ENCODE measurements at regions of chr1 and their contacts with region 1.

Region 1: DNA sequence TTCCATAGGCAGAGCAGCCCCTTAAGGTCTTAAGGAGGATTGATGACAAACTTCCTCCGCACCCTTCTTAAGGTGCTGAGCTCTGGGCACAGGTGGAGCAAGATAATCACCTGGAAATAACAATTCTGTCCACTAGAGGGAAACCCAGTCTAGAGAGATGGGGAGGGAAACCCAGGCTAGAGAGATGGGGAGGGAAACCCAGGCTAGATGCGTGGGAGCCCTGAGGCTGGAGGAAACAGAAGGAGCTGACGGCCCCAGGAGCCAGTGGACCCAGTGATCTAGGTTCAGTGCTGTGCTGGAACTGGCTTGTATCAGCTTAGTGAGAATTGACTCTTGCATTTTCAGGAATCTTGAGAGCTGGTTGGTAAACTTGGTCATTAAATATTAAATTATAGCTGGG is 17.8 kb upstream of the MYCL start:
- DNase-seq: peak; percentile 35
- ATAC-seq: peak; percentile 100
- H3K4me3 ChIP-seq: no peak overlapping the region
- H3K27ac ChIP-seq: no peak overlapping the region
- H3K4me1 ChIP-seq: 0 out of 2 replicates have a peak, but pooled peaks cover 3% of the 10 kb centered on the region
- H3K27me3 ChIP-seq: no peaks in the 10 kb centered on the region
- CTCF ChIP-seq: peak; percentile 70 to 91 (median 72)
- EP300 ChIP-seq: no peak
- POLR2A ChIP-seq: no peak
- RAD21 ChIP-seq: peak; percentile 99

Region 2: DNA sequence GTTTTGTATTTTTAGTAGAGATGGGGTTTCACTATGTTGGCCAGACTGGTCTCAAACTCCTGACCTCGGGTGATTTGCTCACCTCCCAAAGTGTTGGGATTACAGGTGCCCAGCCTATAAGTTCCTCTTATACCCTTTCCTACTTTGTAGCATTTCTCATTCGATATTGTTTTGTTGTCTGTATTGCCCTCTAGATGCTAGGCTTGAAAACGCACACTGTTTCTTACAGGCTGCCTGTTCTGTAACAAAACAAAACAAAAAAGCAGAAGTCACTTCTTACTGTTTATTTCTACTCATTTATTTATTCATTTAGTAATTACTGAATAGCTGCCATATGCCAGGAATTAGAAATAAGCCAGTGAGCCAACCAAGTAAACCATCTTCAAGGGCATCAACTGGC is 565.0 kb before region 1 on chr1:
- CTCF ChIA-PET with region 1: no interaction called
- POLR2A ChIA-PET with region 1: no interaction called
- RAD21 ChIA-PET with region 1: no interaction called
- SMC1A ChIA-PET with region 1: no interaction called
- in situ Hi-C with region 1: no loop called
- intact Hi-C with region 1: no loop called
- DNase-seq: no peak
- ATAC-seq: no peak
- H3K4me3 ChIP-seq: no peak overlapping the region
- H3K27ac ChIP-seq: no peak overlapping the region
- H3K4me1 ChIP-seq: no peaks in the 10 kb centered on the region
- H3K27me3 ChIP-seq: no peaks in the 10 kb centered on the region
- CTCF ChIP-seq: peak in 2 of 3 experiments; percentile 7 to 20; a peak in 1 of 6 replicates
- EP300 ChIP-seq: no peak
- POLR2A ChIP-seq: no peak
- RAD21 ChIP-seq: 0 out of 2 replicates have a peak, but pooled peaks have one; percentile 7

Region 3: DNA sequence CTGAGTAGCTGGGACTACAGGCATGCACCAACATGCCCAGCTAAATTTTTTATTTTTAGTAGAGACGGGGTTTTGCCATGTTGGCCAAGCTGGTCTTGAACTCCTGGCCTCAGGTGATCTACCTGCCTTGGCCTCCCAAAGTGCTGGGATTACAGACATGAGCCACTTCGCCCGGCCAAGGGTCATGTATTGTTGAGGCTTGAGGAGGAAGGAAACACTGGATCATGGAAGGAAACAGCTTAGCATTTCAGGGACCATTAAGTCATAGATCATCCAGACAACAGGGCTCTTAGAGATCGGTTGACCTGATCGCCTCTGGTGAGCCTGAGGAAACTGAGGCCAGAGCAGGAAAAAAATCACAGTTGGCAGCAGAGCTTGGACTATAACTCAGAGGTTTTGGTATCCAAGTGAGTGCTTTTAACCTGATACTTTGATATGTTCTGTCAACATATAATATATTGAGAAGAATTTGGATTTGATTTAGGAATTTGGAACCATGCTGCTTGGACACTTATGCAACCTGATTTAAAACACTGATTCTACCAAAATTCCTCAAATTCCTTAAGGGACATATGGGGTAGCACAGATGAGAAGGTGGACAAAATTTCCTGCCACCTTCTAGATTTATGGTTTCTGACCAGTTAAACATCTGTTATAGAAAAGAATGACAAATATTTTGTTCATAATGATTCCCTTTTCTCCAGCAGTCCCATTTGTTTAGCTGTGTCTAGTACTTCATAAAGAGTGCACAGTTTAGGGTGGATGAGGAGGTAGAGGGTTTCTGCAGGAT is 441.2 kb before region 1 on chr1:
- CTCF ChIA-PET with region 1: no interaction called
- POLR2A ChIA-PET with region 1: no interaction called
- RAD21 ChIA-PET with region 1: no interaction called
- SMC1A ChIA-PET with region 1: no interaction called
- in situ Hi-C with region 1: no loop called
- intact Hi-C with region 1: no loop called
- DNase-seq: no peak
- ATAC-seq: no peak
- H3K4me3 ChIP-seq: no peak overlapping the region
- H3K27ac ChIP-seq: no peak overlapping the region
- H3K4me1 ChIP-seq: no peaks in the 10 kb centered on the region
- H3K27me3 ChIP-seq: no peaks in the 10 kb centered on the region
- CTCF ChIP-seq: no peak
- EP300 ChIP-seq: no peak
- POLR2A ChIP-seq: no peak
- RAD21 ChIP-seq: no peak

Region 4: DNA sequence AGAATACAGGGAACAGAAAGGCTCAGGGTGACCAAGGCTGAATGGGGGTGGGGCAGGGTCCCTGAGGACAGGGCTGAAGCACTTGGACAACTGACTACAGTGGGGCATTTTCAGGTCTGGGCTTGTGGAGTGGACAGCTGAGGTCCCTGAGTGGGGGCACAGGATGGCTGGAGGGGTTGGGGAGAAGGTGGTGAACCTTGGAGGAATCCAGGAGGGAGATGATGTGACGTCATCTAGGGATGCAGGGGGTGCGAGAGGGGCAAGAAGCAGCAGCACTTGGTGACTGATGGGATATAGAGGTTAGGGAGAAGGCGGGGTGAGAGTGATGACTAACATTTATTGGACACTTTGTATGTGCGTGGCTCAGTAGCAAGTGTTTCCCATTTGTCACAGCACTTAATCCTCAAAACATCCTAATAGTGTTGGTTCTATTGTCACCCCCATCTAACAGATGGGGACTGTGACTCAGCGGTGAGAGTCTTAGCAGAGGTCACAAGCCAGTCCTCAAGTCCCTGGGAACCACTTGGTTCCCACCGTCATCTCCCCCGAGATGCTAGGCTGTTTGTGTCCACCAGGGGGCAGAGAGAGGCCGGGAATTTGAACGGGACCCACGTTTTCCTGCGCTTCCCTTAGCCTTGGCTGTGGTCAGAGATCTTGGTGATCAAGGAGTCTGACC is 103.0 kb before region 1 on chr1:
- CTCF ChIA-PET with region 1: interaction called, 20 read pairs
- POLR2A ChIA-PET with region 1: no interaction called
- RAD21 ChIA-PET with region 1: interaction called, 12 read pairs
- SMC1A ChIA-PET with region 1: interaction called, 11 read pairs
- in situ Hi-C with region 1: no loop called
- intact Hi-C with region 1: no loop called
- DNase-seq: peak; percentile 55
- ATAC-seq: peak; percentile 79
- H3K4me3 ChIP-seq: no peak overlapping the region
- H3K27ac ChIP-seq: peak overlapping the region; percentile 42; the same call in 1 of the 2 replicates
- H3K4me1 ChIP-seq: peaks cover 17% of the 10 kb centered on the region
- H3K27me3 ChIP-seq: no peaks in the 10 kb centered on the region
- CTCF ChIP-seq: peak; percentile 79 to 88 (median 80)
- EP300 ChIP-seq: 0 out of 4 replicates have a peak, but pooled peaks of 1 of the 2 experiments have one; percentile 32
- POLR2A ChIP-seq: no peak
- RAD21 ChIP-seq: peak; percentile 87

Region 5: DNA sequence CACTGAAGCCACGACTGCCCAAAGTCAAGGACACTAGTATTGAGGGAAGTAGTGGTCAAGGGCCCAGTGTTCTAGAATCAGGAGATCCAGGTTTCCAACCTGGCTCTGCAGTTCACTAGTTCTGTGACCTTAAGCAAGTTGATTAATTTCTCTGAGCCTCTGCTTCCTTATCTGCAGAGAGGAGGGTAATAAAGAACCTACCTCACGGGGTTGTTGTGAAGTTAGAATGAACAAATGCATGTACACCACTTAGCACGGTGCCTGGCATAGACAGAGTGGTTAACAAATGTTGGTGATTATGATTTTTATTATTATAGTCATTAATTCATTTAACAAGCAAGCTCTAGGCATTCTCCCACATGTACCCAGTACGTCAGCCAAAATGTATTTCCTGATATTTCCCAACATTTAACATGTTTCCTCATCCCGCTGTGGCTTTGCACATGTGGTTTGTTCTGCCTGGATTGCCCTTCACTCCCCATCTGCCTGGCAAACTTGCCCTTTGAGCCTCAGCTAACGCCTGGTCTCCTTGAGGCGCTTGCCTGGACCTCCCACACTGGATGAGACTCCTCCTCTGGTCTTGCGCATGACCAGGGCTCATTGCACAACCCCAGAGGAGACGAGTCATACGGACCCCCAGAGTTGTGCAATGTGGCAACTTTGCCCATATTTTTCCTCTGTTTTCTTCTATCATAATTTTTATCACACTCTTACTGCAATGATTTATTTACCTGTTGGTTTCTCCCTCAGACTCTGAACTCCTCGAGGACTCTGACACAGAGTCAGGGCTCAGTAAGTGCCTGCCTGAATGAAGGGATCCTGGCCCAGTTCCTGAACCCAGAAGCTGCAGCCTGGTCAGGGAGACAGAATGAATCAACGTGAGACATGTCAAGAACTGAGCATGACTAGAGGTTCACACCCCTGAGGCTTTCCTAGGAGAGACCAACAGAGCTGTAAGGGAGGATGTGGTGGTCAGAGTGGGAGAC is 14.7 kb after region 1 on chr1:
- CTCF ChIA-PET with region 1: interaction called, 16 read pairs
- POLR2A ChIA-PET with region 1: interaction called, 3 read pairs
- RAD21 ChIA-PET with region 1: interaction called, 4 read pairs
- SMC1A ChIA-PET with region 1: interaction called, 5 read pairs
- in situ Hi-C with region 1: no loop called
- intact Hi-C with region 1: no loop called
- DNase-seq: no peak
- ATAC-seq: no peak
- H3K4me3 ChIP-seq: no peak overlapping the region
- H3K27ac ChIP-seq: no peak overlapping the region
- H3K4me1 ChIP-seq: no peaks in the 10 kb centered on the region
- H3K27me3 ChIP-seq: no peaks in the 10 kb centered on the region
- CTCF ChIP-seq: no peak
- EP300 ChIP-seq: no peak
- POLR2A ChIP-seq: no peak
- RAD21 ChIP-seq: no peak

Region 6: DNA sequence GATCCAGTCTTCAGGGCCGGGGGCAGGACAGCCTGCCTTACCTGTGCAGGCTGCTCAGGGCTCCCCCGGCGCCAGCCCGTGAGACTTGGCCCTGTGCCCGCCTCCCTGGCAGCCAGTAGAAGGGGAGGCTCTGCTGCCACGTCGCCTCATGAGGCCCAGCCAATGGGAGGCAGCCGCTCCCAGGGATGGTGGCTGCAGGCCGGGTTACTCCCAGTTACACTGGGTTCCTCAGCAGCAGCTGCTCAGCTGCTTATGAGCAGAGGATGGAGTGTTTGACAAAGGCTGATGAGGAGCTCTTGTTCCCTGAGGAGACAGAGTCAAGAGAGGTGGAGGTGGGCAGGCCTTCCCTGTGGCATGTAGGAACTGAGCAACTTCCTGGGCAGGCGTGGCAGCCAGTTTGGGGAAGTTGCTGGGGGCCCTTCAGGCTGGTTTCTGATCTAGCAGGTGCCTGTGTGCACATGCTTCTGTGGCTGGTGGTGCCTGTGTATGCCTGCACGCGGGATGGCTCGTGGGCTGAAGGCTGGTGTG is 41.0 kb after region 1 on chr1:
- CTCF ChIA-PET with region 1: interaction called, 34 read pairs
- POLR2A ChIA-PET with region 1: no interaction called
- RAD21 ChIA-PET with region 1: interaction called, 23 read pairs
- SMC1A ChIA-PET with region 1: interaction called, 18 read pairs
- in situ Hi-C with region 1: no loop called
- intact Hi-C with region 1: no loop called
- DNase-seq: peak; percentile 58
- ATAC-seq: peak; percentile 80
- H3K4me3 ChIP-seq: peak overlapping the region; percentile 14; the same call in 1 of the 2 replicates
- H3K27ac ChIP-seq: peak overlapping the region; percentile 68
- H3K4me1 ChIP-seq: peaks cover 22% of the 10 kb centered on the region
- H3K27me3 ChIP-seq: no peaks in the 10 kb centered on the region
- CTCF ChIP-seq: no peak
- EP300 ChIP-seq: no peak
- POLR2A ChIP-seq: peak; percentile 71
- RAD21 ChIP-seq: no peak

Region 7: DNA sequence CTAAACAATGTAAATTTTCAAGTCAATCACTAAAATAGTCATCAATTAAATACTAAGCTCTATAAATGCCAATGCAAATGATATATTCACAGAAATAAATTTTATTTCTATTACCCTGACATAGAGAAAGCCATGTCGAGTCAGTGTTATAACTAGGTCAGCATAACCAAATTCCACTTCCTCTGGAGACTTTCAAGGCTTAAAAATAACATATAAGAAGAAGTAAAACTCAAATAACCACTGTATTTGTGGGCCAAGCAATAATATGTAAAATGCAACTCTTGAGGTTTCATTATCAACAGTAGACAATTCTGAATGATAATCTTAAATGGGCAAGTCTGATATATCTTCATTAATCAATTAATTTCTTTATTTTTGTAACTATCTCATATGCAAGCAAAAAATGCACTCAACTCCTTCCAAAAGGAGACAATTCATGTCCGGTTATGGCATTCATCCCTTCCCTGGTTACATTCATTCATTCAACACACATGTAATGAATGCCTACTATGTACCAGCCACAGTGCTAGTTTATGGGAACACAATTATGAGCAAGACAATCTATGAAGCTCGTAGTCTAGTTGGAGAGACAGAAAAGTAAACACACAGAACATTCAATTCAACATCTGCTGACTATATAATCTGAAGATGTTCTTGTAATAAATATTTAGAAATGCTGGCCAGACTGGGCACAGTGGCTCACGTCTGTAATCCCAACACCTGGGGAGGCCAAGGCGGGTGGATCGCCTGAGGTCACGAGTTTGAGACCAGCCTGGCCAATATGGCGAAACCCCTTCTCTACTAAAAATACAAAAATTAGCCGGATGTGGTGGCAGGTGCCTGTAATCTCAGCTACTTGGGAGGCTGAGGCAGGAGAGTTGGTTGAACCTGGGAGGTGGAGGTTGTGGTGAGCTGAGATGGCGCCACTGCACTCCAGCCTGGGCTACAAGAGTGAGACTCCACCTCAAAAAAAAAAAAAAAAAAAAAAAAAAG is 83.9 kb after region 1 on chr1:
- CTCF ChIA-PET with region 1: interaction called, 12 read pairs
- POLR2A ChIA-PET with region 1: interaction called, 3 read pairs
- RAD21 ChIA-PET with region 1: interaction called, 3 read pairs
- SMC1A ChIA-PET with region 1: interaction called, 4 read pairs
- in situ Hi-C with region 1: no loop called
- intact Hi-C with region 1: no loop called
- DNase-seq: peak; percentile 53
- ATAC-seq: peak; percentile 95
- H3K4me3 ChIP-seq: 0 out of 2 replicates have a peak overlapping the region, but pooled peaks have one; percentile 16
- H3K27ac ChIP-seq: peak overlapping the region; percentile 89
- H3K4me1 ChIP-seq: peaks cover 42% of the 10 kb centered on the region
- H3K27me3 ChIP-seq: no peaks in the 10 kb centered on the region
- CTCF ChIP-seq: no peak
- EP300 ChIP-seq: no peak
- POLR2A ChIP-seq: no peak
- RAD21 ChIP-seq: no peak

Region 8: DNA sequence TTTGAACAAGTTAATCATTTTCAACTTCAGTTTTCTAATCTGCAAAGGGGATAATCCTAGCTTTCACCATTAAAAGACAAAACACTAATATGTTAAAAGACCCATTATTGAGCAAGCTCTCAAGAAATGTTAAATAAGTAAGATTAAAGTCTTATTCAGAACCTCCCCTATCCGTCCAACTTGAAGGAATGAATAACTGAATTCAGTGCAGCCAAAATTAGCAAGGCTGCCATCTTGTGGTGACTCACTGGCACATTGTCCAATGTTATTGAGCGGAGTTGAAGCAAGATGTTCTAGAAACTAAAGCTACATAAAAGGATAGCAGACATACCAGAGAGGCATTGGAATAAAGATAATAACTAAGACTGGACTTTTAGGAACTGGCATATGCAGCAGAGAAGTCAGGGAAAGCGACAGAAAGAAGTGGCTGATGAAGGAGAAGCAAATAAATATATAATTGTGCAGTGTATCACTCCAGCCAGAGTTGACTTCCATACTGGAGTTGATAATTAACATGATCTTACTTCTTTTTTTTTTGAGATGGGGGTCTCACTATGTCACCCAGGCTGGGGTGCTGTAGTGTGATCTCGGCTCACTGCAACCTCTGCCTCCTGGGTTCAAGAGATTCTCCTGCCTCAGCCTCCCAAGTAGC is 112.8 kb after region 1 on chr1:
- CTCF ChIA-PET with region 1: interaction called, 311 read pairs
- POLR2A ChIA-PET with region 1: interaction called, 8 read pairs
- RAD21 ChIA-PET with region 1: interaction called, 136 read pairs
- SMC1A ChIA-PET with region 1: interaction called, 180 read pairs
- in situ Hi-C with region 1: loop called (anchors 5 kb)
- intact Hi-C with region 1: loop called (anchors 1 kb)
- DNase-seq: no peak
- ATAC-seq: peak; percentile 95
- H3K4me3 ChIP-seq: no peak overlapping the region
- H3K27ac ChIP-seq: no peak overlapping the region
- H3K4me1 ChIP-seq: peaks cover 9% of the 10 kb centered on the region
- H3K27me3 ChIP-seq: no peaks in the 10 kb centered on the region
- CTCF ChIP-seq: peak; percentile 73 to 86 (median 85)
- EP300 ChIP-seq: no peak
- POLR2A ChIP-seq: no peak
- RAD21 ChIP-seq: peak; percentile 92

Region 9: GRCh38 chr1:40338745-40339424 is 419.3 kb after region 1 on chr1:
- CTCF ChIA-PET with region 1: interaction called, 16 read pairs
- POLR2A ChIA-PET with region 1: no interaction called
- RAD21 ChIA-PET with region 1: interaction called, 6 read pairs
- SMC1A ChIA-PET with region 1: interaction called, 4 read pairs
- in situ Hi-C with region 1: no loop called
- intact Hi-C with region 1: no loop called
- DNase-seq: peak; percentile 76
- ATAC-seq: peak; percentile 99
- H3K4me3 ChIP-seq: no peak overlapping the region
- H3K27ac ChIP-seq: no peak overlapping the region
- H3K4me1 ChIP-seq: peaks cover 5% of the 10 kb centered on the region; the same call in 1 of the 2 replicates
- H3K27me3 ChIP-seq: no peaks in the 10 kb centered on the region
- CTCF ChIP-seq: peak; percentile 99; a peak in 5 of 6 replicates
- EP300 ChIP-seq: no peak
- POLR2A ChIP-seq: no peak
- RAD21 ChIP-seq: peak; percentile 98